Activated naive CD4-positive, alpha-beta T cell treated with anti-CD3 and anti-CD28 coated beads for 36 hours (primary cell): ENCODE measurements at regions of chr11 and their contacts with region 1.

Region 1: DNA sequence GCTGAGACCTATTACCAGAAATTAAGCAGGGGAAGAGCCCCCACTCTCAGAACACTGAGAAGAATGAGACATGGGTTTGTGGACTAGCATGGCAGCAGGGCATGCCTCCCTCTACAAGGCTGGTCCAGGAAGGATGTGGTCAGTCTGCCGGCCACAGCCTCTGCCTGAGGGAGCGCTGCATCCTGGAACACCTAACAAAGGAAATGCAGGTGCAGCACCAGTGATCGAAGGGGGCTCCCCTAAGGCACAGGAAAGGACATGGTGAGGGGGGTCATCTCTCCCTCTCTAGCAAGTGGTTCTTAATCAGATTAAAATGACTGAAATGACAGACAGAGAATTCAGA is 40.6 kb upstream of the ARL14EP start:
- DNase-seq: peak; percentile 55
- H3K4me3 Mint-ChIP-seq: no peak overlapping the region
- H3K27ac Mint-ChIP-seq: no peak overlapping the region
- H3K4me1 Mint-ChIP-seq: peaks cover 14% of the 10 kb centered on the region
- H3K27me3 Mint-ChIP-seq: peaks cover 4% of the 10 kb centered on the region

Region 2: GRCh38 chr11:30107899-30108298 is 174.4 kb before region 1 on chr11:
- CTCF ChIA-PET with region 1: no interaction called
- intact Hi-C with region 1: no loop called
- DNase-seq: no peak
- H3K4me3 Mint-ChIP-seq: no peak overlapping the region
- H3K27ac Mint-ChIP-seq: no peak overlapping the region
- H3K4me1 Mint-ChIP-seq: no peaks in the 10 kb centered on the region
- H3K27me3 Mint-ChIP-seq: no peaks in the 10 kb centered on the region

Region 3: DNA sequence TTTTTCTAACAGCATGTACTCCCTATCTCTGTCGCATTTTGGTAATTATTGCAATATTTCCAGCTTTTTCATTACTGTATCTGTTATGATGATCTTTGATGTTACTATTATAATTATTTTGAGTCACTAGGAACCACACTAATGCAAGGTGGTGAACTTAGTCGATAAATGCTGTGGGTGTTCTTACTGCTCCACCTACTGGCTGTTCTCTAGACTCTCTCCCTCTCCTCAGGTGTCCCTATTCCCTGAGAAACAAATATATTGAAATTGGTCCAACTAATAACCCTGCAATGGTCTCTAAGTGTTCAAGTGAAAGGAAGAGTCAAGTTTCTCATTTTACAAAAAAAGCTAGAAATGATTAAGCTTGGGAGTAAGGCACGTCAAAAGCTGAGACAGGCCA is 51.1 kb after region 1 on chr11:
- CTCF ChIA-PET with region 1: no interaction called
- intact Hi-C with region 1: no loop called
- DNase-seq: no peak
- H3K4me3 Mint-ChIP-seq: no peak overlapping the region
- H3K27ac Mint-ChIP-seq: no peak overlapping the region
- H3K4me1 Mint-ChIP-seq: peaks cover 17% of the 10 kb centered on the region
- H3K27me3 Mint-ChIP-seq: no peaks in the 10 kb centered on the region

Region 4: DNA sequence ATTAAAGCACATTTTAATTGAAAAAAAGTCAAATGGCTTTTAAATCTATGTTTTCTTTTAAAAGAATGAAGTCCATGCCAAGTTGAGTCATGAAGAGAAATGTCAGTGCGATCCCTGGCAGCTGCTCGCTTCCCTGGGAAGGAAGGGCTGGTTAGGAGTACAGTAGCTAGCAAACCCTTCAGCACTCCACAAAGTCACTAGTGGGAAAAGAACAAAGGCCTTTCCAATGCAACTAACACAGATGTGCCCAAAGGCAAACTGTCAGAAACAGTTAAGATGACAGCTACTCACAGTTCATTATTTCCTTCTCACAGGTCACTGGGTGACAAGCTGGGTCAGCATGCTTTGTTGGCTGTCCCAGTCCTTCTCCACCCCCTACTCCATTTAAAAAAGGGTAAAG is 778.6 kb after region 1 on chr11:
- CTCF ChIA-PET with region 1: no interaction called
- intact Hi-C with region 1: no loop called
- DNase-seq: no peak
- H3K4me3 Mint-ChIP-seq: no peak overlapping the region
- H3K27ac Mint-ChIP-seq: no peak overlapping the region
- H3K4me1 Mint-ChIP-seq: no peaks in the 10 kb centered on the region
- H3K27me3 Mint-ChIP-seq: no peaks in the 10 kb centered on the region

Region 5: GRCh38 chr11:31139479-31139878 is 857.2 kb after region 1 on chr11:
- CTCF ChIA-PET with region 1: no interaction called
- intact Hi-C with region 1: loop called (anchors 5 kb)
- DNase-seq: no peak
- H3K4me3 Mint-ChIP-seq: no peak overlapping the region
- H3K27ac Mint-ChIP-seq: no peak overlapping the region
- H3K4me1 Mint-ChIP-seq: no peaks in the 10 kb centered on the region
- H3K27me3 Mint-ChIP-seq: peaks cover 5% of the 10 kb centered on the region